OCI-LY7 (cell line): ENCODE measurements at regions of chr21 and their contacts with region 1.

Region 1: GRCh38 chr21:14376851-14377250 is 6.1 kb downstream of the HSPA13 start:
- DNase-seq: peak; percentile 16
- H3K4me3 ChIP-seq: no peak overlapping the region
- H3K27ac ChIP-seq: no peak overlapping the region
- H3K4me1 ChIP-seq: peaks cover 21% of the 10 kb centered on the region
- CTCF ChIP-seq: peak; percentile 70

Region 2: DNA sequence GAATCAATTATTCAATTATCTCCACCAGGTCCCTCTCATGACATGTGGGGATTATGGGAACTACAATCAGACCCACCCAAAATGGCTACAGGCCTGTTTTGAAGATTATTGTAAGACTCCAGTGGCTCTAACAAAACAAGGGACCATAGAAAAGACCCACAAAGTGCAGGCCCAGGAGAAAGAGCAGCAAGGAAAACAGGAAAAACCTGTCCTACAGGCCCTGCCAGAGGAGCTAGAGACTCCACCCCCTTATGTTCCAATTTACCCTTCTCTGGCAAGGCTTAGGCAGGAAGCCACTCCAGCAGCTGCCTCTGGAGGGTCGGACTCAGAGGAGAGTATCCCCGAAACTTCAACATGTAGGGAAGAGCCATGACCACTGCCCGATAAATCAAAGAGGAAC is 262.6 kb before region 1 on chr21:
- CTCF ChIA-PET with region 1: no interaction called
- POLR2A ChIA-PET with region 1: no interaction called
- intact Hi-C with region 1: loop called (anchors 10 kb)
- DNase-seq: no peak
- H3K4me3 ChIP-seq: no peak overlapping the region
- H3K27ac ChIP-seq: no peak overlapping the region
- H3K4me1 ChIP-seq: no peaks in the 10 kb centered on the region
- CTCF ChIP-seq: no peak

Region 3: DNA sequence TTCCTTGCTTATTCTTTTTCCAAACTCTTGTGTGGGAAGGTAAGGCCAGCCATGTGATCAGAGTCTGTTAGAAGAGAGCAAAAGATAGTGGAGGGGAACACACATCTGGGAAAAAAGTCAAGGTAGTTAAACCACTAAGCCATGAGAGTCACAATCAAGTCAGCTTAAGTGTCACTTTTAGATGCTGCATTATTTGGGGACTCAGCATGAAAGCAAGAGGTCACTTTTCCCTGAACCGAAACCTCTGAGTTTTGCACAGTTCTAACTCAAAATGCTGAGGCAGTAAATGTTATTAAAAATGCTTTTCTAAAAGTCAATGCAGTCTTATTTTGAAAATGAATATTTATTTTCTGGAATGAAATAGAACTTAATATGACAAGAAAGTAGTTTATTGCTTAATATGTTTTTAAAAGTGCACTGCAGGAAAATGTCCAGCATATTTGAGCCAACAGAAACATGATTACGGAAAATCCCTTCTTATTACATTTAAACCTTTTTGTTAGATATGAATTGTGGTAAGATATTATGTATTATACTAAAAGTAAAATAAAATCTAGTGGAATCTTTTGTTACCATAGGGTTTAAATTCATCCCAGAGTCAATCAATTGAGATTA is 91.6 kb before region 1 on chr21:
- CTCF ChIA-PET with region 1: no interaction called
- POLR2A ChIA-PET with region 1: no interaction called
- intact Hi-C with region 1: no loop called
- DNase-seq: no peak
- H3K4me3 ChIP-seq: no peak overlapping the region
- H3K27ac ChIP-seq: no peak overlapping the region
- H3K4me1 ChIP-seq: no peaks in the 10 kb centered on the region
- CTCF ChIP-seq: no peak

Region 4: GRCh38 chr21:14685568-14685967 is 308.7 kb after region 1 on chr21:
- CTCF ChIA-PET with region 1: no interaction called
- POLR2A ChIA-PET with region 1: no interaction called
- intact Hi-C with region 1: no loop called
- DNase-seq: peak; percentile 55
- H3K4me3 ChIP-seq: no peak overlapping the region
- H3K27ac ChIP-seq: peak overlapping the region; percentile 71
- H3K4me1 ChIP-seq: peaks cover 73% of the 10 kb centered on the region
- CTCF ChIP-seq: no peak